ENCODE measurements at regions of chrX and their contacts with region 1.

Region 1: GRCh38 chrX:52574416-52575275 is 57.8 kb upstream of the XAGE1B start:
- DNase-seq: peak; percentile 45
- H3K4me3 ChIP-seq: no peak overlapping the region
- H3K27ac ChIP-seq: no peak overlapping the region
- H3K4me1 ChIP-seq: no peaks in the 10 kb centered on the region; a peak in 1 of 4 replicates
- H3K27me3 ChIP-seq: peaks cover 83% of the 10 kb centered on the region; the same call in 1 of the 2 replicates
- CTCF ChIP-seq: peak; percentile 81
- EP300 ChIP-seq: no peak
- RAD21 ChIP-seq: peak; percentile 69

Region 2: GRCh38 chrX:52341493-52341892 is 233.2 kb before region 1 on chrX:
- CTCF ChIA-PET with region 1: no interaction called
- POLR2A ChIA-PET with region 1: no interaction called
- DNase-seq: no peak
- H3K4me3 ChIP-seq: no peak overlapping the region
- H3K27ac ChIP-seq: no peak overlapping the region
- H3K4me1 ChIP-seq: no peaks in the 10 kb centered on the region
- H3K27me3 ChIP-seq: peaks cover 23% of the 10 kb centered on the region; the same call in 1 of the 2 replicates
- CTCF ChIP-seq: no peak
- EP300 ChIP-seq: no peak
- RAD21 ChIP-seq: no peak

Region 3: DNA sequence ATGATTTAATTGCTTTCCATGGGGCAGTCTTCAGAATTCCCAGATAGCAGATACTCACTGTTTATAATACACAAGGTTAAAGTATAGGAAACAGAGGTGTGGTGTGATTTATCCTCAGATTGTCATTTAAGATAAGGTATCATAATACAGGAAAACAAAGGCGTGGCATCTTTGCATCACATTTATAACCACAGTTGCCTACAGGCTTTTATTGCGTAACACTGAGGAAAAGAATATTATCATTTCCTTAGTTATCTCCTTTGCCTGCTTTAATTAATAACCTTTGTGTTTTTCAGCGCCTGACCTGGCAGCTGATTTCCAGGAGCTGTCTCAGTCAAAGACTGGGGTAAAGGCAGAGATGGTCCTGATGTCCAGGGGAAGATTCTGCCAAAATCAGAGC is 11.2 kb after region 1 on chrX:
- CTCF ChIA-PET with region 1: interaction called, 15 read pairs
- POLR2A ChIA-PET with region 1: no interaction called
- DNase-seq: no peak
- H3K4me3 ChIP-seq: no peak overlapping the region
- H3K27ac ChIP-seq: no peak overlapping the region
- H3K4me1 ChIP-seq: no peaks in the 10 kb centered on the region
- H3K27me3 ChIP-seq: peaks cover 39% of the 10 kb centered on the region; the same call in 1 of the 2 replicates
- CTCF ChIP-seq: no peak
- EP300 ChIP-seq: no peak
- RAD21 ChIP-seq: no peak